Ascending aorta (tissue), 2 donors: ENCODE measurements at regions of chr12 and their contacts with region 1.

Region 1: DNA sequence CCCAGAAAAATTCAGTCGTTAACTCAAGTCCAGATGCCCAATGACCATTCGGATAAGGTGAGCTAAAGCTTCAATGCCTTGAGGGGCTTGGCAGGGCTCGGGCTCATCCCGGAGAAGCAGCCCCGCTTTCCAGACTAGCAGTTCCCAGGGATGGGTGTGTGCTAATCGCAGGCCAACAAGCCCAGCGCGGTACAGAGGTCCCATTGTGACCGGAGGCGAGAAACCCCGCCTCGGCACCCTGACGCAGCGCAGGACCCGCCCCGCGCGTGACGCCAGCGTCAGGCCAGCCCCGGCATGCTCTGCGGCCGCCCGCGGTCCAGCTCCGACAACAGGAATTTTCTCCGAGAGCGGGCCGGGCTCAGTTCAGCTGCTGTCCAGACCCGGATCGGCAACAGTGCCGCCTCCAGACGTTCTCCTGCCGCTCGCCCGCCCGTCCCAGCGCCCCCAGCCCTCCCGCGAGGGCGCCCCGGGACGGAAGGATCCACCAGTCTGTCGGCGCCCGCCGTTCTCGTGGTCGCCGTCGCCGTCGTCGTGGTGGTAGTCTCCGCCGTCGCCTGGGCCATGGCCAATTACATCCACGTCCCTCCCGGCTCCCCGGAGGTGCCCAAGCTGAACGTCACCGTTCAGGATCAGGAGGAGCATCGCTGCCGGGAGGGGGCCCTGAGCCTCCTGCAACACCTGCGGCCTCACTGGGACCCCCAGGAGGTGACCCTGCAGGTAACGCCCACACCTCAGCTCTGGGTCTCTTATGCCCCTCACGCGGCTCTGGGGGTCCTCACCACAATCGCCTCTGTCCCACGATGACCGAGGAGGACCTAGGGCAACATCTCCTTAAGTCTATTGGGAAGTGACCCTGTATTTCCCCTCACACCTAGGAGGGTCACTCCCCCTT is at the start of gene ETNK1:
- DNase-seq: peak; percentile 77 to 97
- H3K4me3 ChIP-seq: peak within 1 kb of the TSS; percentile 82 to 92
- H3K27ac ChIP-seq: peak within 1 kb of the TSS; percentile 97 to 98
- H3K4me1 ChIP-seq: peaks cover 0 to 7% of the 10 kb centered on the region in 2 donors
- H3K27me3 ChIP-seq: no peaks in the 10 kb centered on the region
- CTCF ChIP-seq: no peak
- total RNA-seq, gene ETNK1: 13.9 TPM

Region 2: GRCh38 chr12:22275846-22276245 is 349.3 kb before region 1 on chr12:
- intact Hi-C with region 1: loop called (anchors 10 kb)
- DNase-seq: peak; percentile 66 to 97
- H3K4me3 ChIP-seq: no peak overlapping the region
- H3K27ac ChIP-seq: peak overlapping the region; percentile 56 to 86
- H3K4me1 ChIP-seq: peaks cover 0 to 30% of the 10 kb centered on the region in 2 donors
- H3K27me3 ChIP-seq: no peaks in the 10 kb centered on the region
- CTCF ChIP-seq: no peak

Region 3: DNA sequence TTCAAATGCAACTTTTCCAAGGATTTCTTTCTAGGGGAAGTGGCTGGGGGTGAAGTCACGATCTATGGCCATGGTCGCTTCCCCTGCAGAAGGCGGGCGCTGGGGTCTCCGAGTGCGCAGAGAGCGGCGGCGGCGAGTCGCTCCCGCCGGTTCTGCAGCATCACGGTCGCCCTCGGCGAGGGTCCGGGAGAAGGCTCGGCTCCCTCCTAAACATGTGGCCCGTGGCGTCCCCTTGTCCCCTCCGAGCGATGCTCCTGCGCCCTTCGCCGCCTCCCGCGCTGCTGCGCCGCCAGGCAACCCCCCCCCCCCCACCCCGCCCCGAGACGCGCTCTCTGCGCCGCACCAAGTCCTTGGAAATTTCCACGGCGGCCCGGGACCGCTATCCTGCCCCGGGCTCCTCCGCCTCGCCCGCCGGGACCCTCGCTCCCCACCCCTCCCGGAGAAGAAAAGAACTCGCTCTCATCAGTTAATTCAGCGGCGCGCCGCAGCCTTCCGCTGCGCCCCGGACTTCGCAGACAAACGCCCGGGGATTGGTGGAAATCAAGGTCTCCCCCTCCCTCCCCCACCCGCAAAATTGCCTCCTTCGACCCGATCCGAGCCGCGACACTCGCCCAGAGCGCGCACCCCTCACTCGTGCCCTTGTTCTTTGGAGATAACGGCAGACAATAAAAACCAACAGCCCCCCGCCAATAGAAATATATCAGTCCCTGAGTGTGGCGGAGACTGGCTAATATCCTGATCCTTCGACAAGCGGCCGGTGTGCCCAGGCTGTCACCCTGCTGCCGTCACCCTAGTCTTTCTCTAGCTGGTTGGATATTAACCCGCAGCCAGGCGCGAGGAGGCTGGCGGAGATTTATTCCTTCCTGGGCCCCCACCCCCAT is 290.5 kb before region 1 on chr12 and contains the start of gene ST8SIA1:
- intact Hi-C with region 1: no loop called
- DNase-seq: peak in 1 of 2 donors; percentile 63
- H3K4me3 ChIP-seq: peak within 1 kb of the TSS; percentile 59 to 73
- H3K27ac ChIP-seq: peak within 1 kb of the TSS; percentile 2 to 9
- H3K4me1 ChIP-seq: no peaks in the 10 kb centered on the region
- H3K27me3 ChIP-seq: no peaks in the 10 kb centered on the region
- CTCF ChIP-seq: no peak
- total RNA-seq, gene ST8SIA1: 9.7 TPM

Region 4: DNA sequence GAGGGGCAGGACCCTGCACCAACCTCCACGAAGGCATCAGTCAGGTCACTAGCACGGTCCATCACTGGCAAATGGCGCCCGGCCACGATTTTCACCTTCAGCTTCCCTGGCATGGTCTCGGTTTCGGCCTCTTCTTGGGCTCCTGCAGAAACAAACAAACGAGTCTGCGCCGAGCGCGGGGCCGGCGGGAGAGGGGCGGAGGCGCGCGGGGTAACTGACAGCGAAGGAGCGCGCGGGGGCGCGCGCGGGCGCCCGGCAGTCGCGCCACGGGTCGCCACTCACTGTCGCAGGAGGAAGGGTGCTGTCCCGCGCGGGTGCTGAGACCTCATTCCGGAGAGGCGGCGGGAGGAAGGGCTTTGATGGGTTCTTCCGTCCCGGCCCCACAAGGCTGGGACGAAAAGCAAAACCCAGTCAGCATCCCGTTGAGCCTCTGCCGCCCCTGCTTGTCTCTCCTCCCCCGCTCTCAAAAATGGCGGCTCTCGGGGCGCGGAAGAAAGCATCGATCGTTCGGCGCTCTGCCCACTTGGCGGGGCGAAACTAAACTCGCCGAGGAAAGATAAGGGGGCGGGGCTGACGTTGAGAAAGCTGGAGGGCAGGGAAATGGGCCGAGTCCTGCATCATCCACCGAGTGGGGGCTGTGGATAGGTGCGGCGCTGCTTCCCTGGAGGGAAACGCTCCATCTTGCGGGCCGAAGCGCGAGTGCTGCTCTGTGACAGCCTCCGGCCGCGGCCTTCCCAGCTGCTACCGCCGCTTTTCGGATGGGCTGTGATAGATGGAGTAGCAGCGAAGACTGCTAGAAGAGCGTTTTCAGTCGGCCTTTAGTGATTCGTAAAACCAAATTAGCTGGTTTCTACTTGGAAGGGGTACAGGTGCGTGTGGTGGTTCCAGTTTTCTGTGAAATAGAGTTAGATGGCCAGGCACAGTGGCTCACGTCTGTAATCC is 80.8 kb before region 1 on chr12 and contains the start of gene C2CD5:
- intact Hi-C with region 1: loop called (anchors 1 kb)
- DNase-seq: peak; percentile 88 to 98
- H3K4me3 ChIP-seq: peak within 1 kb of the TSS; percentile 90 to 97
- H3K27ac ChIP-seq: peak within 1 kb of the TSS; percentile 87 to 93
- H3K4me1 ChIP-seq: peaks cover 0 to 25% of the 10 kb centered on the region in 2 donors
- H3K27me3 ChIP-seq: no peaks in the 10 kb centered on the region
- CTCF ChIP-seq: peak; percentile 25 to 31 (median 28)
- total RNA-seq, gene C2CD5: 34.7 TPM

Region 5: GRCh38 chr12:22562036-22563028 is 62.8 kb before region 1 on chr12:
- intact Hi-C with region 1: no loop called
- DNase-seq: no peak
- H3K4me3 ChIP-seq: no peak overlapping the region
- H3K27ac ChIP-seq: no peak overlapping the region
- H3K4me1 ChIP-seq: no peaks in the 10 kb centered on the region
- H3K27me3 ChIP-seq: no peaks in the 10 kb centered on the region
- CTCF ChIP-seq: no peak